HEK293 (cell line): ENCODE measurements at regions of chr18 and their contacts with region 1.

Region 1: DNA sequence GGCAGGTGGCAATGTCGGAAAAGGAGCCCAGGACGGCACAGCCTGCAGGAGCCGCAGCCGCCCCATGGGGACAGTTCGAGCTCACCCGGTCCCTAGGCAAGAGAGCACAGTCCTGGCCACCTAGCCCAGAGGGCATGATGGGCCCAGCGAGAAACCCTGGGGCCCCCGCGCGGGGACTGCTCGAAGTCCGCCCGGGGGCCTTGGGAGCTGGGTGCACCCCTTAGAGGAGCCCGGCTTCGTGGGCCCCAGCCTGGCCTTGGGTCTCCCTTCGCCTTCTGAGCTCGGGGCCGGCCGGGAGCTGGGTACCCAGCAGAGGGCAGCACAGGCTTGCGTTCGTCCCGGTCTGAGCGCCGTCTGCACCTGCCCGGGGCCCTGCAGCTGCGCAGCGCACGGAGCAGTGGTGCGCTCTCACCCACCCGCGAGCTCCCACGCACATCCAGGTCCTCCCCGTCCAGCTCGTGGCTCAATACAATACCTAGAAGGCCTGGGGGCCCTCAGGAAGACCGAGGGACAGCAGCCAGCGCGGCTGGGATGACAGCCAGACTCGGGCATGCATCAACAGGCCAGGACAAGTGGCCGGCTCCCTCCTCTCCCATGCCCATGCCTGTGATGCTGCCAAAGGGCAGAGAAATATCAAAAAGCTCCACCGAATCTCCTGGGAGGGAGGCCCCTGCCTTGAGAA is 96.2 kb upstream of the ZNF532 start:
- H3K4me3 ChIP-seq: peak overlapping the region; percentile 22
- H3K27ac ChIP-seq: no peak overlapping the region
- H3K4me1 ChIP-seq: peaks cover 2% of the 10 kb centered on the region; the same call in 1 of the 2 replicates
- CTCF ChIP-seq: peak; percentile 96

Region 2: DNA sequence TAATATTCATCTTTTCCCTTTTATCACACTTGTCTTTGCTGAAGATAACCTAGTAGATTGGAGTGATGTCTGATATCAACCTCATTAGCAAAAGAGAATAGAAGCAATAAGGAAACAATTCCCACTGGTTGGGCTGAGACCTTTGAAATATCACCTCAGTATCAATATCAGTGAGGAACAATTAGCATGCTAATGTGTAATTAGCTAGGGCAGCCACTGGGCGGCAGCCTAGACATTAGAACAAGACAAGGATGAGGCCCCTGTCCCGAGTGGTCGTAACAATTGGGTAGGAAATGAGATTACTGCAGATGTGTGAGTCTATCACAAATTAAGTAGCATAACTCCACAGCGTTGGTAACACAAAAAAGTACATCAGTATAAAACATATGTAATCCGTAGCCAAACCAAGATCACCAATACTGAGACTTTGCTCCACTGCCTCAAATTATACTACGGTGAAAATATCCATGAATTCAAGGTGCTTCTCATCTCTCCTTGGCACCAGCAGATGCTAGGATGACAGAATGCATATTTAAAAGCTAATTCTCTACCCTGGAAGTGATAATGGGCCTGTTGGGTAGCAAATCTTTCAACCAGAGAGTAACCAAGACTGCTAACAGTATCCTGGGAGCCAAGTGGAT is 238.6 kb before region 1 on chr18:
- CTCF ChIA-PET with region 1: interaction called, 363 read pairs
- POLR2A ChIA-PET with region 1: interaction called, 4 read pairs
- H3K4me3 ChIP-seq: no peak overlapping the region
- H3K27ac ChIP-seq: no peak overlapping the region
- H3K4me1 ChIP-seq: no peaks in the 10 kb centered on the region
- CTCF ChIP-seq: peak; percentile 65

Region 3: DNA sequence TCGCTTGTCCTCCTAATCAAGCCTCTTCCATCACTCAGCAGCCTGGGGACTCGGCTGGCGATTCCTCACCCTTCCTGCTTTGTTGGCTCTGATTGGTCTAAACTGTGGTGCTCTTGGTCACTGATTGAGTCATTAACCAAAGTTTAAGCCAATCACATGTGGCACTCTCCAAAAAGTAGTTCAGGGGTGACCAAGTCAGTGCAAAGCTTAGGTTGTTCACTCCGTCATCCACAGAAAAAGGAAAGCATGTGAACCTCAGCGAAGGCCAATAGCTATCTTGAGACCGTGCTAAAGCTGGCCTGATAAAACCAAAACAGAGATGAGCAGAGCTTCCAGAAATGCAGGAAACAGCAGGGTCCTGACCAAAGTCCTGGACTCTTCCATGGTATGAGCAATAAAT is 144.4 kb before region 1 on chr18:
- CTCF ChIA-PET with region 1: interaction called, 10 read pairs
- POLR2A ChIA-PET with region 1: no interaction called
- H3K4me3 ChIP-seq: no peak overlapping the region
- H3K27ac ChIP-seq: no peak overlapping the region
- H3K4me1 ChIP-seq: peaks cover 12% of the 10 kb centered on the region
- CTCF ChIP-seq: no peak

Region 4: DNA sequence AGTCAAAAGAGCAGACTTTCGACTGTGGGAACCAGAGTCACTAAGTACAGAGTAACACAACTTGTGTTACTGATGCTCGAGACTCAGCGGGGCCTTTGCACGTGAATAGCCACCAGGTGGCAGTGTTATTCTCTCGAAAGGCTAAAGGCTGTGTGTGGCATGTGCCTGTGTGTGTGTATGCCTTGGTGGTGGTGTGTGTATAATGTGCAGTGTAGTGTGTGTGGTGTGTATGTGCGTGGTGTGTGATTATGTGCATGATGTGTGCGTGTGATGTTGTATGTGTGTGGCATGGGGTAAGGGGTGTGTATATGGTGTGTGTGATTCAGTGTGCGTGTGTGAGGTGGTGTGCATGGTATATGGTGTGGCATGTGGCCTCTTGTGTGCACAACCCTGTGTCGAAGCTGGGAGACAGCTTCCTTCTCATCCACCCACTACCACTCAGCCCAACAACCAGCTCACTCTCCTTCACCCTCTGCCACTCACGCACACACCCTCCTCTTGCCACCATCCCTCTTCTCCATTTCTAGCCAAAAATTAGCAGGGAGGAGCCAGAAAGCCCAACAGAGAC is 13.3 kb after region 1 on chr18:
- CTCF ChIA-PET with region 1: interaction called, 103 read pairs
- POLR2A ChIA-PET with region 1: no interaction called
- H3K4me3 ChIP-seq: no peak overlapping the region
- H3K27ac ChIP-seq: no peak overlapping the region; the same call in 1 of the 2 replicates
- H3K4me1 ChIP-seq: peaks cover 15% of the 10 kb centered on the region
- CTCF ChIP-seq: peak; percentile 100

Region 5: GRCh38 chr18:59079264-59079972 is 311.0 kb after region 1 on chr18:
- CTCF ChIA-PET with region 1: interaction called, 16 read pairs
- POLR2A ChIA-PET with region 1: no interaction called
- H3K4me3 ChIP-seq: no peak overlapping the region
- H3K27ac ChIP-seq: no peak overlapping the region
- H3K4me1 ChIP-seq: peaks cover 16% of the 10 kb centered on the region
- CTCF ChIP-seq: no peak